ENCODE measurements at regions of chr1 and their contacts with region 1.

Region 1: GRCh38 chr1:21270086-21270689 is 20.1 kb downstream of the ECE1 start:
- DNase-seq: peak; percentile 66
- ATAC-seq: peak; percentile 62
- H3K4me3 ChIP-seq: peak overlapping the region in 1 of 3 experiments; percentile 11; a peak in 1 of 6 replicates
- H3K27ac ChIP-seq: peak overlapping the region; percentile 70
- H3K4me1 ChIP-seq: peaks cover 84% of the 10 kb centered on the region
- H3K27me3 ChIP-seq: no peaks in the 10 kb centered on the region
- CTCF ChIP-seq: peak; percentile 85
- EP300 ChIP-seq: no peak
- POLR2A ChIP-seq: no peak
- RAD21 ChIP-seq: peak; percentile 71; the same call in 1 of the 2 replicates

Region 2: GRCh38 chr1:21232044-21232443 is 38.1 kb before region 1 on chr1:
- CTCF ChIA-PET with region 1: interaction called, 12 read pairs
- POLR2A ChIA-PET with region 1: no interaction called
- in situ Hi-C with region 1: no loop called
- intact Hi-C with region 1: no loop called
- DNase-seq: peak; percentile 56
- ATAC-seq: peak; percentile 79
- H3K4me3 ChIP-seq: no peak overlapping the region
- H3K27ac ChIP-seq: no peak overlapping the region
- H3K4me1 ChIP-seq: peaks cover 6% of the 10 kb centered on the region; the same call in 1 of the 2 replicates
- H3K27me3 ChIP-seq: no peaks in the 10 kb centered on the region
- CTCF ChIP-seq: peak; percentile 87
- EP300 ChIP-seq: no peak
- POLR2A ChIP-seq: no peak
- RAD21 ChIP-seq: peak; percentile 84

Region 3: GRCh38 chr1:21247892-21248715 is 22.1 kb before region 1 on chr1:
- CTCF ChIA-PET with region 1: no interaction called
- POLR2A ChIA-PET with region 1: interaction called, 22 read pairs
- in situ Hi-C with region 1: no loop called
- intact Hi-C with region 1: loop called (anchors 1 kb)
- DNase-seq: peak; percentile 73
- ATAC-seq: peak; percentile 73
- H3K4me3 ChIP-seq: no peak overlapping the region
- H3K27ac ChIP-seq: peak overlapping the region; percentile 27
- H3K4me1 ChIP-seq: peaks cover 63% of the 10 kb centered on the region
- H3K27me3 ChIP-seq: no peaks in the 10 kb centered on the region
- CTCF ChIP-seq: no peak
- EP300 ChIP-seq: no peak
- POLR2A ChIP-seq: no peak
- RAD21 ChIP-seq: no peak

Region 4: DNA sequence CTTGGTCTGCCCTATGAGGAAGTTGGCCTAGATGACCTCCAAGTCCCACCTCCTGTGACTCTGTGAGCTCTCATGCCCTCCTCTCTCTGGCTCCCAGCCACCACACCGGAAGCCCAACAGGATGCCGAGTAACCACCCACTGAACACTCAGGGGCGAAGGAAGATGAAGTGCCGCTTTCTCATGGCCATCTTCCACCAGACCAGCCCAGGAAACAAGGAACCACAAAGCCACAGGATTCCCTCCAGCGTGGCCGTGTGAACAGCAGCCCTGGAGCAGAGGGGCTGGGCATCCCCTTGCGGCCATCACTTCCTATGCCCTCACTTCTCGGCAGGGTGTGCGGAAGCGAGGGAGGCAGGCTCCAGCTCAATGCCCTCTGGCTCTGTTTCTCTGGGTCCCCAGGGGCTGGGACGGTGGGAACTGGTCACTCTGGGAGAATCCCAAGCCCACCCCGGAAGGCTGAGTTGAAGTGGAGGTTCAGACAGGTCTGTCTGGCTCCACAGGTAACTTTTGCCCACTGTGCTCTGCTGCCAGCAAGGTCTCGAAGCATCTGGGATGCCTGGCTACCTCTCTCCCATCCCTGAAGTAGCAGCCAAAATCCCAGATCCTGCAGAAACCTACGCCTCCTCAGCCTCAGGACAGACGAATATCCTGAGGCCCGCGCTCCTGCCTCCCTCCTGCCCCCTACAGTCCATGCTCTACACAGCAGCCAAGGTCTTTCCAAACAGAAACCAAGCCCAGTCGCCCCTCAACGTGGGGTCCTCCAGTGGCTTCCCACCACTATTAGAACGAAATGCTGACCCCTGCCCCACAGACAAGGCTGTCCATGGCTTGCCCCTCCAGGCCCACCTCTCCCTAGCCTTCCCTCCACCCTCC is 64.3 kb after region 1 on chr1:
- CTCF ChIA-PET with region 1: no interaction called
- POLR2A ChIA-PET with region 1: interaction called, 26 read pairs
- in situ Hi-C with region 1: no loop called
- intact Hi-C with region 1: loop called (anchors 5 kb)
- DNase-seq: no peak
- ATAC-seq: peak; percentile 46
- H3K4me3 ChIP-seq: peak overlapping the region; percentile 62 to 78 (median 69)
- H3K27ac ChIP-seq: peak overlapping the region; percentile 25
- H3K4me1 ChIP-seq: peaks cover 94% of the 10 kb centered on the region
- H3K27me3 ChIP-seq: no peaks in the 10 kb centered on the region
- CTCF ChIP-seq: peak; percentile 87
- EP300 ChIP-seq: no peak
- POLR2A ChIP-seq: no peak
- RAD21 ChIP-seq: peak; percentile 61; the same call in 1 of the 2 replicates

Measured in HepG2 (cell line).